Activated T-helper 2 cell treated with anti-CD3 and anti-CD28 coated beads, Interferon-gamma antibody, Interleukin-2, Interleukin-4, amounts not matched to agents 10 μg/mL and 5 μg/mL and 100 μg/mL, durations not matched to agents 14 hours and 24 hours and 36 hours (primary cell): ENCODE measurements at regions of chr16 and their contacts with region 1.

Region 1: DNA sequence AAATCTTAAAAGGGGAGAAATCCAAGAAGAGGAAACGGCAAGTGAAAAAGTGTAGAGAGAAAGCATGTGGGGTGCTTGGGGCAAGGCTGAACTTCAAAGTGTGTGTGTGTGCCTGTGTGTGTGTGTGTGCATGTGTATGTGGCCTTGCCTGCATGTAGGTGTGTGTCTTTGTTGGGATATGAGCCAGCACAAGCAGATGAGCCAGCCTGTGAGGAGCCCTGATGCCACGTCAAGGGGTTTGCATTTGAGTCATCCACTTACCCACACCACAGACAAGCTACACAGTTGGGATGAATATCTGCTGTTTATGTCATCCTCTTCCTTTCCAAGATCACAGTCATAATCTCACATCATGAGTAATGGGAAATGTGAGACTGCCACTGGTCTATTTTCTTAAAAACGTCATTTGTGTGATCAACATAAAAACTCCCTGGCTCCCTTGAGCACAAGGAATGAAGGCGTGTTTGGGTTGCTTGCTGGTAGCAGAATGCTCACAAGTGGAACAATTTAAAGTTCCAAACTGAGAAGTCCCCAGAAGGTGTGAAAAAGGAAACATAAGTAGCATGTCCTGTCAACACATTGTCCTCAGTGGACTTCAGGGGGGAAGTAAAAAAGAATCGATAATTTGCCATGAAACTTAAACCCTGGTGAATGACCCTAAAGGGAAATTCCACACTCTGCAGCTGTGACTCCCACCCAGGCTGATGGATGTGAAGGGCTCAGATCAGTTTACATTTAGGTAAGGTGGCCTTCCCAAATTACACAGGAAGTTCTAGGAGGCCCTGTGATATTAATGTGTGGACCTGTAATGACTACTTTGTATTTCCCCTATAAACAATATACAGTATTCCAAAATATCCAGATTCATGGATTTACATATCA is 14.7 kb downstream of the KCTD19 start:
- DNase-seq: peak; percentile 76
- H3K4me3 Mint-ChIP-seq: no peak overlapping the region
- H3K27ac Mint-ChIP-seq: peak overlapping the region; percentile 98
- H3K4me1 Mint-ChIP-seq: peaks cover 45% of the 10 kb centered on the region
- H3K27me3 Mint-ChIP-seq: no peaks in the 10 kb centered on the region

Region 2: GRCh38 chr16:66988197-66988788 is 323.6 kb before region 1 on chr16 and contains the start of gene CES4A:
- intact Hi-C with region 1: loop called (anchors 5 kb)
- DNase-seq: no peak
- H3K4me3 Mint-ChIP-seq: peak within 1 kb of the TSS; percentile 61
- H3K27ac Mint-ChIP-seq: peak within 1 kb of the TSS; percentile 88
- H3K4me1 Mint-ChIP-seq: peaks cover 40% of the 10 kb centered on the region
- H3K27me3 Mint-ChIP-seq: no peaks in the 10 kb centered on the region
- total RNA-seq, gene CES4A: 29.8 and 30.1 TPM in 2 replicates

Region 3: DNA sequence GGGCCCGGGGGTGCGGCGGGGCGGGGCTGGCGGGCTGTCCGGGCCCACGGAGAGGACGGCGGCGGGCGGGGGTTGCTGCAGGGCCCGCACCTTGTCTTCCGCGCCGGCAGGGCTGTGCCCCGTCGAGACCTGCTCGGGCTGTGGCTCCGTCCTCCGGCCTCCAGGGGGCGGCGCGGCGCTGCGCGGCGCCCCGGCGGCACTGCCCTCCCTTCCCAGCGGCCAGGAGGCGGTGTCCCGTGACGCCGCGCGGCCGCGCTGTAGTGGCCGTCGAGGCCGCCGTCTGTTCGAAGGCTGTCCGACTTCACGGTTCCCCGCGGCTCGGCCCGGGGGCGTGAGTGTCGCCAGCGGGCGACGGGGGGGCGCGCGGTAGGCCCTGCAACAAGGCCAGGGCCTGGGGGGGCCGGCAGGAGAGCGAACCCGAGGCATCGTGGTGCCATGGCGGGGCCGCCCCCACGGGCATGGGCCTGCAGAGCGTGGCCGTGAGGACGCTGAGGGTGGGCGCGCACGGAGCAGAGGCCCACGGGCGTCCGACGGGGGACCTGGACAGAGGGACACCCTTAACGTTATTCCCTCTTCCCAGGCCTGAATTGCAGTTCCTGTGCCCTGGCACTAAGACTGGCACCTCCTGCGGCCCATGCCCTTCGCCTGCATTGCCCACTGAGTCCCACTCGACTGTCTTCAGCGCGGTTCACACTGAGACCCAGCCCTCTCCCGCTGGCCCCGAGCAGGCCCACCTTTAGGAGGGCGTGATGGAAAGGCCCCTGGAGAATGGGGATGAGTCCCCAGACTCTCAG is 32.4 kb before region 1 on chr16 and contains the start of gene PLEKHG4:
- intact Hi-C with region 1: loop called (anchors 1 kb)
- DNase-seq: peak; percentile 77
- H3K4me3 Mint-ChIP-seq: peak within 1 kb of the TSS; percentile 84
- H3K27ac Mint-ChIP-seq: peak within 1 kb of the TSS; percentile 86
- H3K4me1 Mint-ChIP-seq: peaks cover 24% of the 10 kb centered on the region
- H3K27me3 Mint-ChIP-seq: no peaks in the 10 kb centered on the region
- total RNA-seq, gene PLEKHG4: 30.4 and 33.4 TPM in 2 replicates

Region 4: GRCh38 chr16:67326472-67327309 is 14.8 kb after region 1 on chr16 and contains the starts of genes KCTD19 and LRRC36:
- intact Hi-C with region 1: loop called (anchors 2 kb)
- DNase-seq: peak; percentile 40
- H3K4me3 Mint-ChIP-seq: peak within 1 kb of the TSS; percentile 84
- H3K27ac Mint-ChIP-seq: peak within 1 kb of the TSS; percentile 36
- H3K4me1 Mint-ChIP-seq: peaks cover 10% of the 10 kb centered on the region
- H3K27me3 Mint-ChIP-seq: peaks cover 47% of the 10 kb centered on the region
- total RNA-seq, gene KCTD19: 0.87 and 1.2 TPM in 2 replicates
- total RNA-seq, gene LRRC36: 0.60 and 0.89 TPM in 2 replicates